ENCODE measurements at regions of chr5 and their contacts with region 1.

Region 1: GRCh38 chr5:176724472-176724871 is 77.2 kb downstream of the TSPAN17 start:
- DNase-seq: no peak
- H3K4me3 ChIP-seq: no peak overlapping the region
- H3K27ac ChIP-seq: no peak overlapping the region
- H3K4me1 ChIP-seq: no peaks in the 10 kb centered on the region
- CTCF ChIP-seq: no peak

Region 2: GRCh38 chr5:175642998-175643397 is 1081.5 kb before region 1 on chr5:
- CTCF ChIA-PET with region 1: no interaction called
- POLR2A ChIA-PET with region 1: no interaction called
- intact Hi-C with region 1: no loop called
- DNase-seq: no peak
- H3K4me3 ChIP-seq: no peak overlapping the region
- H3K27ac ChIP-seq: no peak overlapping the region
- H3K4me1 ChIP-seq: no peaks in the 10 kb centered on the region
- CTCF ChIP-seq: no peak

Region 3: DNA sequence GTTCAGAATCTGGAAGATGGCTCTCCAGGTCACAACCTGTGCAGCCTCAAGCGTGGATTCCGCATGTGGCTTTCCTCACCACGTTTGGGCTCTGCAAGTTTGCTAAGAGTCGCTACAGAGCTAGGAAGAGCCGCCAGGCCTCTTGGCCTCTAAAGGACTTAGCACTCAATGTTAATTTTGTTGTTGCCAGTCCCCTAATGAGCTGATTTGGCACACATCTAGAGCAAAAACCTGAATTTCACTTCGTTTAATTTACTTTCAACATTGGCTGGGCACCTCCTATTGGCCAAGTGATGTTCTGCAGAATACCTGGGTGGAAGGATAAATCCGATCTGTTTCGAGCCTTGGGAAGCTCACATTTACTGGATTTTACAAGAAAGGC is 20.1 kb after region 1 on chr5:
- CTCF ChIA-PET with region 1: no interaction called
- POLR2A ChIA-PET with region 1: no interaction called
- intact Hi-C with region 1: loop called (anchors 1 kb)
- DNase-seq: no peak
- H3K4me3 ChIP-seq: no peak overlapping the region
- H3K27ac ChIP-seq: no peak overlapping the region
- H3K4me1 ChIP-seq: no peaks in the 10 kb centered on the region
- CTCF ChIP-seq: peak; percentile 64

Region 4: DNA sequence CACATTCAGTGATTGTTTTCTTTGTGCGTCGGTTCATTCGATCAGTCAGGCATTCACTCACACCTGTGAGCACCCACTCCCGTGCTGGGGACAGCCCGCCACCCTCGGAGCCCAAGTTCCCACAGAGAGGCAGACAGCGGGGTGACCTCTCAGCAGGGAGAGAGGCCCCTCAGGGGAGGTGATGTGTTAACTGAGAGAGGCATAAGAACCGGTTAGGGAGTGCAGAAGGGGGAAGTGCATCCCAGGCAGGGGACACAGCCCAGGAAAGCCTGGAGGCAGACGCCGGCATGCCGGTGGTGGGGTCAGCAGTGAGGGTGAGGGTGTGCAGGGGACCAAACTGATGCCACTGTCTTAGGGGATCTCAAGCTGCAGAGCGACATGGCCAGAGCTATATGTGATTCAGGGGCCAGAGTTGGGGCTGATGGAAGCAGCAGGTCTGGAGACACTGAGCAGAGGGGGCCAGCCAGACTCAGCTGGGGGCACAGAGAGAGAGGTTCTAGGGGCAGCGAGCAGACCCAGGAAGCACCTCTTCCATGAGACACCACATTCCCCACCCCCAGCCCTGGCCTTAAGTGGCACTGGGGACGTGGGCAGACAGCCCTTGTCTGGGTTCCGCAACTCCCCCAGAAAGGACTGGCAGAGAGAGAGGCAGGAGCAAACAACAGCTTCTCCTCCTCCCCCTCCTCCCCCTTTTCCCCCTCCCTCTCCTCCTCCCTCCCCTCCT is 138.7 kb after region 1 on chr5:
- CTCF ChIA-PET with region 1: no interaction called
- POLR2A ChIA-PET with region 1: no interaction called
- intact Hi-C with region 1: no loop called
- DNase-seq: peak; percentile 30
- H3K4me3 ChIP-seq: no peak overlapping the region
- H3K27ac ChIP-seq: no peak overlapping the region
- H3K4me1 ChIP-seq: peaks cover 9% of the 10 kb centered on the region
- CTCF ChIP-seq: no peak

Measured in OCI-LY7 (cell line).